ENCODE measurements at regions of chr10 and their contacts with region 1.

Region 1: GRCh38 chr10:62050893-62051433 is 149.5 kb downstream of the ARID5B start:
- DNase-seq: peak; percentile 100
- ATAC-seq: peak; percentile 41
- H3K4me3 ChIP-seq: peak overlapping the region; percentile 63
- H3K27ac ChIP-seq: peak overlapping the region; percentile 77
- H3K4me1 ChIP-seq: peaks cover 60% of the 10 kb centered on the region
- H3K27me3 ChIP-seq: no peaks in the 10 kb centered on the region
- CTCF ChIP-seq: no peak

Region 2: GRCh38 chr10:61628875-61629513 is 422.0 kb before region 1 on chr10:
- CTCF ChIA-PET with region 1: no interaction called
- POLR2A ChIA-PET with region 1: interaction called, 13 read pairs
- intact Hi-C with region 1: no loop called
- DNase-seq: peak; percentile 100
- ATAC-seq: peak; percentile 93
- H3K4me3 ChIP-seq: no peak overlapping the region
- H3K27ac ChIP-seq: peak overlapping the region; percentile 1; the same call in 1 of the 2 replicates
- H3K4me1 ChIP-seq: peaks cover 31% of the 10 kb centered on the region
- H3K27me3 ChIP-seq: no peaks in the 10 kb centered on the region
- CTCF ChIP-seq: no peak

Region 3: DNA sequence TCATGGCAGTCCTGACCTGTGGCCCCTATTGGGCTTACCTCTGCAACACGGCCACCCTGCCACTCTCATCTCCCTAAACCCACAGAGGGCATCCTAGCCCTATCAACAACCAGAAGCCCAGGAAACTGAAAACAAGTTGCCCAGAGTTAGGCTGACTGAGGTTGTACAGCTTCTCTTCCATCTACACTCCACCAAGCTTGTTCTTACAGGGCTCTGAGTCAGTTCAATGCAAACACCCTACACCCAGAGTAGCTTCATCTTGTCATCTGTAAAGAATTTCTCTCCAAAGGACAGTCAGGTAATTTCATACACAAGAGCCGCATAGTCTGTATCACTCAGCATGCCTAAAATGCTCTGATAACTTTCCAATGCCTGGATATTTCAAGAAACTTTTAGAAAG is 25.9 kb after region 1 on chr10:
- CTCF ChIA-PET with region 1: interaction called, 12 read pairs
- POLR2A ChIA-PET with region 1: interaction called, 10 read pairs
- intact Hi-C with region 1: loop called (anchors 1 kb)
- DNase-seq: peak; percentile 100
- ATAC-seq: peak; percentile 99
- H3K4me3 ChIP-seq: peak overlapping the region; percentile 31
- H3K27ac ChIP-seq: peak overlapping the region; percentile 61
- H3K4me1 ChIP-seq: peaks cover 45% of the 10 kb centered on the region
- H3K27me3 ChIP-seq: no peaks in the 10 kb centered on the region
- CTCF ChIP-seq: peak; percentile 95

Region 4: GRCh38 chr10:62095181-62096071 is 44.5 kb after region 1 on chr10:
- CTCF ChIA-PET with region 1: interaction called, 14 read pairs
- POLR2A ChIA-PET with region 1: no interaction called
- intact Hi-C with region 1: loop called (anchors 1 kb)
- DNase-seq: peak; percentile 97
- ATAC-seq: peak; percentile 50
- H3K4me3 ChIP-seq: peak overlapping the region; percentile 43
- H3K27ac ChIP-seq: peak overlapping the region; percentile 57
- H3K4me1 ChIP-seq: peaks cover 43% of the 10 kb centered on the region
- H3K27me3 ChIP-seq: no peaks in the 10 kb centered on the region
- CTCF ChIP-seq: no peak

Region 5: DNA sequence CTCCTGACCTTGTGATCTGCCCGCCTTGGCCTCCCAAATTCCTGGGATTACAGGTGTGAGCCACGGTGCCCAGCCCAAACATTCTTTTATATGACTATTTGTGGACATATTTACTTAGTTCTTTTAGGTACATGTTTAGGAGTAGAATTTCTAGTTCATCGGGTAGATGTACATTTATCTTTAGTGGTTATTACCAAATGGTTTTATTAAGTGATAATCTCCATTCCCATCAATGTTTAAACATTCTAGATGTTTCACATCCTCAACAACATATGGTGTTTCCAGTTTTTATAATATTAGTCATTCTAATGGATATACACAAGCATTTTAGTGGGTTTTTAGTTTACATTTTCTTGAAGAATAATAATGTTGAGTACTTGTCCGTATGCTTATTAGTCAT is 85.9 kb after region 1 on chr10:
- CTCF ChIA-PET with region 1: no interaction called
- POLR2A ChIA-PET with region 1: interaction called, 3 read pairs
- intact Hi-C with region 1: loop called (anchors 1 kb)
- DNase-seq: peak; percentile 100
- ATAC-seq: peak; percentile 85
- H3K4me3 ChIP-seq: no peak overlapping the region
- H3K27ac ChIP-seq: peak overlapping the region; percentile 76
- H3K4me1 ChIP-seq: peaks cover 25% of the 10 kb centered on the region
- H3K27me3 ChIP-seq: no peaks in the 10 kb centered on the region
- CTCF ChIP-seq: no peak

Region 6: GRCh38 chr10:62171791-62172190 is 120.8 kb after region 1 on chr10:
- CTCF ChIA-PET with region 1: no interaction called
- POLR2A ChIA-PET with region 1: no interaction called
- intact Hi-C with region 1: no loop called
- DNase-seq: peak; percentile 81
- ATAC-seq: peak; percentile 89
- H3K4me3 ChIP-seq: no peak overlapping the region
- H3K27ac ChIP-seq: no peak overlapping the region
- H3K4me1 ChIP-seq: peaks cover 8% of the 10 kb centered on the region
- H3K27me3 ChIP-seq: no peaks in the 10 kb centered on the region
- CTCF ChIP-seq: no peak